Right lobe of liver (tissue), 6 donors: ENCODE measurements at regions of chr16 and their contacts with region 1.

Region 1: DNA sequence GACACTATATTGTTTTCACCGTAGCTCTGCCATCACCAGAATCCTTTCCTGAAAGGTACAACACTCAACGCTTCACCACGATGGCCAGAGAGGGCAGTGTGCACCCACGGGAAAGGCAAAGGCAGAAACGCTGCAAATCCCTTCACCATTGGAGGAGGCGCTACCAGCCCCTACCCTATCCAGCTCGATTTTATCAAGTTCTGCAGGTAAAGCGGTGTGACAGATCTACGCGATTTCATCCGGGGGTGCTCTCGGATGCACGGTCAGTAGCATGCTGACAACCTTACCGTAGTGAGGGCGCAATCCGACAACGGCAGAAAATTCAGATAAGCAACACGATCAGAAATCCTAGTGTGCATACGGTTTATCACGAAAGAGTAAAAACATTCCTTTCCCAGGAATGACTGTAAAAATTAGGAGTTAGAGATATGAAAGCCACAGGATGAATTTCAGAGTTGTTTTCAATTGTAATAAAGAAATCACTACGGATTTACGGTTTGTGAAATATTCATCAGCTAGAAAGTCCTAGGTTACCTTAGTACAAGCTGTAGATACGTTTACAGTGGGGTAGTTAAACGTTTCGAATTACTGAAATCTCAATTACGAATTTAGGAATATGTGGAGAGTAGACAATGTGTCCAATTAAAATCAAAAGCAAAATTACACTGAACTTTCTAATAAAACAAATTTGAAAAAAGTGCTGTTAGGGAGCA is 1.8 kb downstream of the NETO2 start:
- DNase-seq: peak; percentile 81 to 85 (median 83)
- ATAC-seq: peak; percentile 88 to 96 (median 94)
- H3K4me3 ChIP-seq: peak overlapping the region; percentile 33 to 53 (median 34)
- H3K27ac ChIP-seq: no peak overlapping the region
- H3K4me1 ChIP-seq: peaks cover 0 to 12% (median 3%) of the 10 kb centered on the region in 4 donors
- H3K27me3 ChIP-seq: no peaks in the 10 kb centered on the region
- CTCF ChIP-seq: peak; percentile 80 to 95 (median 90)
- POLR2A ChIP-seq: no peak

Region 2: GRCh38 chr16:47046726-47047523 is 95.0 kb before region 1 on chr16:
- intact Hi-C with region 1: no loop called
- DNase-seq: no peak
- ATAC-seq: no peak
- H3K4me3 ChIP-seq: no peak overlapping the region
- H3K27ac ChIP-seq: no peak overlapping the region
- H3K4me1 ChIP-seq: no peaks in the 10 kb centered on the region
- H3K27me3 ChIP-seq: no peaks in the 10 kb centered on the region
- CTCF ChIP-seq: no peak
- POLR2A ChIP-seq: no peak

Region 3: DNA sequence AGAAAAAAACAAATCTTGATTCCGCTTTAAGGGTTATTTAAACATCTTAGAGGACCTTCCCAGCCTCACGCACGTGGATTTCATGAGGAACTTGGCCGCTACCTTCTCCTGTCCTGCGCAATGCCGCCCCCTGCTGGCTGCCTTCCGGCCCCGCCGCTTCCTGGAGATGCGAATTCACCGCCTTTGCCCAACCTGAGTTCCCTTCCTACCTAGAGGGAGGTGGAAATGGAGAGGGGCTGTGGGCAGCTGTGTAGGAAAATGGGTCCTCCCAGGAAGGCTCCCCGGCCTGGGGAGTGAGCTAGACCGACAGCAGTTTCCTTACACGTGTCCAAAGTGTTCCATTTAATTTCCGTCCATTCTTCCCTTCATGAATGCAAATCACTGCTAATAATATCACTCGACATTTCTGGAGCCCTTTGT is 1014.9 kb after region 1 on chr16:
- intact Hi-C with region 1: loop called in 1 of 2 experiments (anchors 10 kb)
- DNase-seq: peak; percentile 84 to 86 (median 85)
- ATAC-seq: peak; percentile 93 to 98 (median 97)
- H3K4me3 ChIP-seq: no peak overlapping the region
- H3K27ac ChIP-seq: no peak overlapping the region
- H3K4me1 ChIP-seq: no peaks in the 10 kb centered on the region
- H3K27me3 ChIP-seq: no peaks in the 10 kb centered on the region
- CTCF ChIP-seq: peak; percentile 79 to 97 (median 93)
- POLR2A ChIP-seq: no peak